ENCODE measurements at regions of chr3 and their contacts with region 1.

Region 1: DNA sequence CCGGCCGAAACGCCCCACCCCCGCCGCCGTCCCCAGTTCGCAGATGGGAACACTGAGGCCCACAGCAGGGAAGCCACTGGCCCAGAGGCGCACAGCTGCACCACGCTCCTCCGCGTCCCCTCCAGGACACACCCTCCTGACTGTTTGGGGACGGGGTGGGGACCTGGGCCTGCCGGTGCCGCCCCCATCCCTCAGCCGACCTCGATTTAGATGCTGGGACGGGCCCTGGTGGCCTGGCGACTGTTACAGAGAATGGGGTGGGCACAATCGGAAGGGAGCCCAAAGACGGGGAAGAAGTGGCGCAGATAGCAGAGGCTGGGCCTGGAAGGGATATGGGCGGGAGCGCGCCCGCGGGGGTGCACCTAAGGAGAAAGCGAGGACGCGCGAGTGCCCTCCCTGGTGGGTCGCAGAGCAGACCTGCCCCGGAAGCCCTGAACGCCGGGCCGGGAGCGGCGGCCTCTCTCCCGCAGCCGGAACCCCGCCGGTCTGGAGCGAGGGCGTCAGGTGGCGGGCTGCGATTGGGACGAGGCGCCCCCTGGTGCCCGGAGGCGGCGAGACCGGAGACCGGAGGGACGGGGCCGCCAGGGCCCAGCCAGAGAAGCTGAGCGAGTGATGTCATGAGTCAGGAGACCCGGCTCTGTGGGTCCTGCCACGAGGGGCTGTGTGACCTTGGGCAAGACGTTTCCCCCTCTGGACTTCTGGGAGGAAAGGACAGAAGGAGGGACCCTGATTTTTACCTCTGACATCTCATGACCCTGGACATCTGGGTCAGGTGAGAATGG is 78.4 kb downstream of the IQSEC1 start:
- DNase-seq: peak; percentile 90
- H3K4me3 Mint-ChIP-seq: peak overlapping the region; percentile 86
- H3K27ac Mint-ChIP-seq: peak overlapping the region; percentile 87
- H3K4me1 Mint-ChIP-seq: peaks cover 71% of the 10 kb centered on the region
- H3K27me3 Mint-ChIP-seq: no peaks in the 10 kb centered on the region

Region 2: DNA sequence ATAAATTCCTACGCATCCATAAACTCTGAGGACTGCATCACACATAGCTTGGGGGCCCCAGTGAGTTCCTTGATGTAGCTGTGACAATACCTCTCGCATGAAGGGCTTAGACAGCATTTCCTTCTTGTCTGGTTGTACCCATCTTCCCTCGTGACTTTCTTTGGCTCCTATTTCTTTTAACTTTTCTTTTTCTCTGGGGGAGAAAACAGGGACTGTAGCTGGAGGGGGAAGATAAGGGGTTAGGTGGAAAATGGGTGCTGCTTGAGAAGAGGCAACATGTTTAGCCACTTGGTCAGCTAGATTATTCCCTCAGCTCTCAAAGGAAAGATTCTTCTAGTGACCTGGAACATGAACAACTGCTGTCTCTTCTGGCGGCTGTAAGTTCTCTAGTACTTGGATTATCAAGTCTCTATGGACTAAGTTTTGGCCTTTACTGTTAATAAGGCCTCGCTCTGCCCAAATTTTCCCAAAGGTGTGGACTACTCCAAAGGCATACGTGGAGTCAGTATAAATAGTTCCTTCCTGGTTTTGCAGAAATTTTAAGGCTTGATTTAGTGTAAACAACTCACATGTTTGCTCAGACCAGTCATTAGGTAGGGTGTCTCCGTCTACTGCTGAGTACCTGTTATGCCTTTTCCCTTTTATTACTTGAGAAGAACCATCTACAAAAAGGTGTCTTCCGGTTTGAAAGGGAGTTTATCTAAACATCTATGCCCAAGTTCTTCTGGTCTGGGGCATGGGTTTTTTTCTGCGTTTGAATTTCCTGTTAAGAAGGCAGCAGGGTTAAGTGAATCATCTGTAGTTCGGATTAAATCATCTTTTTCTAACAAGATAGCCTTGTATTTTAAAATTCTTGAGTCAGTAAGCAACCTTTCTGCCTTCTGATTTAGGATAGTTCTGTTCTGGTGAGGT is 1743.6 kb before region 1 on chr3:
- CTCF ChIA-PET with region 1: no interaction called
- intact Hi-C with region 1: no loop called
- DNase-seq: peak; percentile 16
- H3K4me3 Mint-ChIP-seq: no peak overlapping the region
- H3K27ac Mint-ChIP-seq: peak overlapping the region; percentile 65
- H3K4me1 Mint-ChIP-seq: peaks cover 17% of the 10 kb centered on the region
- H3K27me3 Mint-ChIP-seq: peaks cover 3% of the 10 kb centered on the region

Region 3: DNA sequence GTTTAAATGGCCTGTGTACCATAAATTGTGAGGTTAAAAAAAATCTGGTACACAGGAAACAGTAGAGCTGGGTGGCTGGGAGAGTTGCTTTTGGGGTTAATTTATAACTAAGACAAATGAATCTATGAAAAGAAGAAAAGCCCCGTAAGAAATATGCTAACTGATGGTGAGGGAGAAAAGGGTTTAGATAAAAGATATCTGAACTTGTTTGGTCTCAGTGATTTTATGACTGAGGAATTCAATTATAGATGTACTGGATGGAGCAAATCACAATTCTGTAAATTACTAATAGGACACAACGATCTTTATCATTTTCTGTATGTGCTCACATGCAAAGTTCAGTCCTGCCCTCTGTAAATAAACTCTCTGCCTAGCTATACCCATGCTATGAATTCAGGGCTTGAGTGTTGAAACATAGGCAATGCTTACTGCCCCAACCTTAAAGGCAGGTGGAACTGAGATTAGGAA is 678.0 kb before region 1 on chr3:
- CTCF ChIA-PET with region 1: no interaction called
- intact Hi-C with region 1: no loop called
- DNase-seq: no peak
- H3K4me3 Mint-ChIP-seq: no peak overlapping the region
- H3K27ac Mint-ChIP-seq: no peak overlapping the region
- H3K4me1 Mint-ChIP-seq: no peaks in the 10 kb centered on the region
- H3K27me3 Mint-ChIP-seq: peaks cover 7% of the 10 kb centered on the region

Region 4: GRCh38 chr3:12868039-12869034 is 126.5 kb before region 1 on chr3:
- CTCF ChIA-PET with region 1: interaction called, 3 read pairs
- intact Hi-C with region 1: loop called (anchors 1 kb)
- DNase-seq: peak; percentile 71
- H3K4me3 Mint-ChIP-seq: peak overlapping the region; percentile 67
- H3K27ac Mint-ChIP-seq: no peak overlapping the region
- H3K4me1 Mint-ChIP-seq: peaks cover 7% of the 10 kb centered on the region
- H3K27me3 Mint-ChIP-seq: peaks cover 16% of the 10 kb centered on the region

Region 5: DNA sequence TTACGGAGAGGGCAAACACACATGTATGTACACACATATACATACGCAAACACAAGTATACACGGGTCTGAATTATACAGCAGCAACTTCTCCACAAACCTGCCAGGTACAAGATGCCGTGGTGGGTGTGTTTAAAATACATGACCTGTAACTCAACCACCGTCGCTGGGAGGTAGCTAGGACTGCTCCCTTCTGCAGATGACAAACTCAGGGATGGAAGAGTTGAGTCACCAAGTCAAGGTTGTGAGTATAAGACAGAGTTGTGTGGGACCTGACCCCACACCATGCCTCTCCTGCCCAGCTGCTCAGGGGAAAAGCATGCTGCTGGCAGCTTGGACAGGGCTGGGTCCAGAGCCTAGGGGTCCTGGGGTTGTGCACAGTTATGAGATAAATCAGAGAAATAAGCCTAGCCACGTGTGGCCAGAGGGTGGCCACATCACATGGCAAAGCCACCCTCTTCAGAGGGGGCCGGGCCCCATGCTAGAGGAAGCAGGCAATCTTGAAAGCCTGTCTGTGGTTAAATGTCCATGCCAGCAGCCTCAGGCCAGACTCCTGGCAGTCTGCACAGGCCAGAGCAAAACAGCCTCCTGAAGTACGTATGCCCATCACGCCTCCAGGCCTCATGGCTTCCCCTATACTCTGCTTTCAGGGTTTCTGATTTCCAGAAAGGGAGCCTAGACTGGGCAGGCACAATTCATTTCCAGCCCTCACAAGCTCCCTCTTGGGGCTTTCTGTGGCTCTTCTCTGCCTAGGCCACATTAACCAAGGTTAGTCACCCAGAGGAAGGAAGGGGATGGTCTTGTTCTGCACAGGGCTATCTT is 45.7 kb before region 1 on chr3:
- CTCF ChIA-PET with region 1: no interaction called
- intact Hi-C with region 1: loop called (anchors 2 kb)
- DNase-seq: peak; percentile 62
- H3K4me3 Mint-ChIP-seq: no peak overlapping the region
- H3K27ac Mint-ChIP-seq: peak overlapping the region; percentile 69
- H3K4me1 Mint-ChIP-seq: peaks cover 50% of the 10 kb centered on the region
- H3K27me3 Mint-ChIP-seq: no peaks in the 10 kb centered on the region

Region 6: DNA sequence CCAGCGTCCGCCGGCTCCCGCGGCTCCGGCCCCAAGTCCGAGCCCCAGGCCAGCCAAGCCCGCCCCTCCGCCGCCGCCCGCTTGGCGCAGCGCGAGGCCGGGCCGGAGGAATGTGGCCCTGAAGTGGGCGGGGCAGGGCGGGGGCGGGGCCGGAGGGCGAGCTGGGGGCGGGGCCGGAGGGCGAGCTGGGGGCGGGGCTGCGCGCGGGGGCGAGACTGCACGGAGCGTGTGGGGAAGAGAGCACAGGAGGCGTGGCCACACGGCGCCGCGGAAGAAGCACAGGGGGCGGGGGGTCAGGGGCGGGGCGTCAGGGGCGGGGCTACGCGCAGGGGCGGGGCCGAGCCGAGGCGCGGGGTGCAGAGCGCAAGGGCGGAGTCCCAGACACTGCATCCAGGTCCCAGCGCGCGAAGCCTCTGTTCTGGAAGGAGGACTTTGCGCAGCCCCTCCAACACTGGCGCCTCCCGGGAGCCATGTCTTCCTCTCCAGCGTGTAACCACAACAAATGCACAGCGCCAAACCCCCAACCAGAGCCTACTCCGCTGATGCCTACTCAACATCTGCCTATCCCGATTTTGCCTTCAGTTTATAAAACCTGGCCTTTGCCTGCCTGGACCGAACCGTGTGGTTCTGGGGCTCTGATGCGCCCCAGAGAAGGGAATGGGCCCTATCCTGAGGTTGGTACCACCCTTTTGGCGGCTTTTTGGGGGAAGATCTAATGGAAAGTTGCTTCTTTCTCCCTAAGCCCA is 27.0 kb before region 1 on chr3:
- CTCF ChIA-PET with region 1: interaction called, 3 read pairs
- intact Hi-C with region 1: loop called (anchors 1 kb)
- DNase-seq: peak; percentile 89
- H3K4me3 Mint-ChIP-seq: peak overlapping the region; percentile 59
- H3K27ac Mint-ChIP-seq: no peak overlapping the region
- H3K4me1 Mint-ChIP-seq: peaks cover 51% of the 10 kb centered on the region
- H3K27me3 Mint-ChIP-seq: no peaks in the 10 kb centered on the region

Region 7: DNA sequence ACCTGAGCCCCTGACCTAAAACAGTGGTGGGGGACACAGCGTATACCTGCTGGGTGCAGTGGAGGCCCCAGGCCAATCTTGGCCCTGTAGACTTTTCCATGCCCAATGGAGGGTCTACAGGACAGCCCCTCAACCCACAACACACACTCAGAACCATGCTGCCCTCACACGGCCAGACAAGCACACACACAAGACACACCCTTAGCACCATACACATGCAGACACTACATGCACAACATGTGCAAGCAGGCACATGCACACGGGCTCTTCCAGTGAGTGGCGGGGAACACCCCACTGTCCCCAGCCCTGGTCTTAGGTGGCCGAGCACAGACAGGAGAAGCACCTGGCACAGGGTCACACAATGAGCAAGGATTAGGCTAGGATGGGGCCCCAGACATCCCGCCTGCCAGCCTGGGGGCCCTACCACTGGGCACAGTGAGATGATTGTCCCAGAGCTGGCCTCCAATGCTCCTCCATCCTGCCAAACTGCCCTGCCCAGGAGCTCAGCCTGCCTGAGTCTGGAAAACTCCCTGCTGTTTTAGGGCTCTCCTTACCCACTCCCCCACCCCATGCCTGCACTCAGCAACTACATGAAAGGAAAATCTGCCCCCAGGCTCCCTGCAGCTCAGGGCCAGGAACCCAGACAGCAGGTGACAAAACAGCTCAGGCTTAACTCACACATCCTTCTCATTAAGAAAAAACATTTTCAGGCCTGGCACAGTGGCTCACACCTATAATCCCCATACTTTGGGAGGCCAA is 62.7 kb after region 1 on chr3:
- CTCF ChIA-PET with region 1: no interaction called
- intact Hi-C with region 1: no loop called
- DNase-seq: no peak
- H3K4me3 Mint-ChIP-seq: no peak overlapping the region
- H3K27ac Mint-ChIP-seq: no peak overlapping the region
- H3K4me1 Mint-ChIP-seq: no peaks in the 10 kb centered on the region
- H3K27me3 Mint-ChIP-seq: no peaks in the 10 kb centered on the region